AG04450 (cell line): ENCODE measurements at regions of chr5 and their contacts with region 1.

Region 1: GRCh38 chr5:170120576-170120975 is 14.9 kb downstream of the FOXI1 start:
- DNase-seq: peak; percentile 66
- H3K4me3 ChIP-seq: no peak overlapping the region
- H3K27ac ChIP-seq: peak overlapping the region; percentile 94
- H3K27me3 ChIP-seq: no peaks in the 10 kb centered on the region
- CTCF ChIP-seq: no peak

Region 2: GRCh38 chr5:170100066-170100943 is 20.3 kb before region 1 on chr5:
- CTCF ChIA-PET with region 1: interaction called, 11 read pairs
- POLR2A ChIA-PET with region 1: no interaction called
- DNase-seq: peak; percentile 61
- H3K4me3 ChIP-seq: no peak overlapping the region
- H3K27ac ChIP-seq: no peak overlapping the region
- H3K27me3 ChIP-seq: no peaks in the 10 kb centered on the region
- CTCF ChIP-seq: peak; percentile 70

Region 3: GRCh38 chr5:170818232-170818631 is 697.7 kb after region 1 on chr5:
- CTCF ChIA-PET with region 1: no interaction called
- POLR2A ChIA-PET with region 1: no interaction called
- DNase-seq: no peak
- H3K4me3 ChIP-seq: no peak overlapping the region
- H3K27ac ChIP-seq: no peak overlapping the region
- H3K27me3 ChIP-seq: no peaks in the 10 kb centered on the region
- CTCF ChIP-seq: no peak